ENCODE measurements at regions of chr11 and their contacts with region 1.

Region 1: GRCh38 chr11:22666688-22667439 is 453 bp downstream of the GAS2 start:
- DNase-seq: no peak
- ATAC-seq: peak; percentile 72
- H3K4me3 ChIP-seq: peak overlapping the region; percentile 59
- H3K27ac ChIP-seq: peak overlapping the region; percentile 77
- H3K4me1 ChIP-seq: no peaks in the 10 kb centered on the region
- H3K27me3 ChIP-seq: no peaks in the 10 kb centered on the region
- CTCF ChIP-seq: peak in 1 of 3 experiments; percentile 5; a peak in 1 of 6 replicates
- EP300 ChIP-seq: no peak
- POLR2A ChIP-seq: peak; percentile 65; the same call in 1 of the 2 replicates
- RAD21 ChIP-seq: no peak

Region 2: DNA sequence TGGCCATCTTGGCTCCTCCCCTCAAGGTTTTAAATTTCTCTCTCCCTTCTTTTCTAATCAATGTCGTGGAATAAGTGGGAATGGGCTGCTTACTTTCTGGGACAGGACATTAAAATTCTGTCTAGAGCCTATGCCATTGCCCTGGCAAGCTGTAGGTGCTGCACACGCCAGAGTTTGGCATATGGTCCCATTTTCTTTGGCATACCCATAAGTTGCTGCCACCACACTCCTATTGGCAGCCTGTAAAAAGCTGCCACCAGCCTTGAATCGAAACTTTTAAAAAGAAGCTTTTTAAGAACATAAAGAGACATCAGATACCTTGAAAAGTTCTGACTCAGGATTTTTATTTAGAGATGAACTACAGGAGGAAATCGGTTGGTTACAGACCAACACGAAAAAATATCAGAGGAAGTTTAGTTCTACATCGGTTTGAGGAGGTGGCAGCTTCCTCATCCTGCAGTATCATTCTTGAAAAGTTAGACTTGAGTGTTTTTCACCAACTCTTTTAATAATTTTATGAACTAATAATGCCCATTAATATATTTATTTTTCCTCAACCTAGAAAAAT is 991.7 kb before region 1 on chr11:
- CTCF ChIA-PET with region 1: no interaction called
- POLR2A ChIA-PET with region 1: no interaction called
- RAD21 ChIA-PET with region 1: no interaction called
- SMC1A ChIA-PET with region 1: no interaction called
- in situ Hi-C with region 1: no loop called
- intact Hi-C with region 1: no loop called
- DNase-seq: no peak
- ATAC-seq: no peak
- H3K4me3 ChIP-seq: no peak overlapping the region
- H3K27ac ChIP-seq: no peak overlapping the region
- H3K4me1 ChIP-seq: no peaks in the 10 kb centered on the region
- H3K27me3 ChIP-seq: no peaks in the 10 kb centered on the region
- CTCF ChIP-seq: no peak
- EP300 ChIP-seq: no peak
- POLR2A ChIP-seq: no peak
- RAD21 ChIP-seq: no peak

Region 3: DNA sequence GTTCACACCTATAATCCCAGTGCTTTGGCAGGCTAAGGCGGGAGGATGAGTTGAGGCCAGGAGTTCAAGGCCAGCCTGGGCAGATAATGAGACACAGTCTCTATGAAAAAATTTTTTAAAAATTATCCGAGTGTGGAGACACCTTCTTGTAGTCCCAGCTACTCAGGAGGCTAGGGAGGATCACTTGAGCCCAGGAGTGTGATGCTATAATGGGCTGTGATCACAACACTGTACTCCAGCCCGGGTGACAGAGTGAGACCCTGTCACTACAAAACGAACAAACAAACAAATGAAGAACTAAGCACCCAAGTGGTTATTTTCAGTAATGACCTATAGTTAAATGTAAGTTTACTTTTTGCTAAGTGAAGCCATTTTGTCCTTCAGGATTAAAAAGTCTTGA is 441.7 kb before region 1 on chr11:
- CTCF ChIA-PET with region 1: no interaction called
- POLR2A ChIA-PET with region 1: no interaction called
- RAD21 ChIA-PET with region 1: no interaction called
- SMC1A ChIA-PET with region 1: no interaction called
- in situ Hi-C with region 1: no loop called
- intact Hi-C with region 1: no loop called
- DNase-seq: no peak
- ATAC-seq: no peak
- H3K4me3 ChIP-seq: no peak overlapping the region
- H3K27ac ChIP-seq: no peak overlapping the region
- H3K4me1 ChIP-seq: no peaks in the 10 kb centered on the region
- H3K27me3 ChIP-seq: no peaks in the 10 kb centered on the region
- CTCF ChIP-seq: no peak
- EP300 ChIP-seq: no peak
- POLR2A ChIP-seq: no peak
- RAD21 ChIP-seq: no peak

Region 4: DNA sequence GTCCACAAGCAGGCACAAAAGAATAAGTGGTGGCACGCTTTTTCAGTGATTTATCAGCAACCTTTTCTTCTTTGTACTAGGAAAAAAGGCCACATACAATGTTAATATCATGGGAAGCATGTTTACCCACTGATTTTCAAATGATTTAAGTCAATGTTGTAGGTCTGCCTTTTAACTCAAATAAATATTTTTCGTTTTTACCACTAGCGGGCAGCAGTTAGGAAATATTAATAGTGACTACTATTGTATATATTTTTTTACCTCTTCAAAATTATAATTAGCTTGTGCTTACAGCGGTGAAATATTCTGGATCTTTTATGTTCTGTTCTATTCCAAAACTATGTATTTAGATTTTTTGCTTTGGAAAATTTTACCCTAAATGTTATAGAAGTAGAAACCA is 335.1 kb before region 1 on chr11:
- CTCF ChIA-PET with region 1: no interaction called
- POLR2A ChIA-PET with region 1: no interaction called
- RAD21 ChIA-PET with region 1: interaction called, 4 read pairs
- SMC1A ChIA-PET with region 1: interaction called, 3 read pairs
- in situ Hi-C with region 1: no loop called
- intact Hi-C with region 1: loop called (anchors 5 kb)
- DNase-seq: no peak
- ATAC-seq: no peak
- H3K4me3 ChIP-seq: no peak overlapping the region
- H3K27ac ChIP-seq: no peak overlapping the region
- H3K4me1 ChIP-seq: no peaks in the 10 kb centered on the region
- H3K27me3 ChIP-seq: no peaks in the 10 kb centered on the region; a peak in 1 of 4 replicates
- CTCF ChIP-seq: no peak; a peak in 1 of 6 replicates
- EP300 ChIP-seq: no peak
- POLR2A ChIP-seq: no peak
- RAD21 ChIP-seq: no peak

Region 5: GRCh38 chr11:22405377-22405776 is 261.5 kb before region 1 on chr11:
- CTCF ChIA-PET with region 1: no interaction called
- POLR2A ChIA-PET with region 1: no interaction called
- RAD21 ChIA-PET with region 1: no interaction called
- SMC1A ChIA-PET with region 1: no interaction called
- in situ Hi-C with region 1: no loop called
- intact Hi-C with region 1: no loop called
- DNase-seq: no peak
- ATAC-seq: no peak
- H3K4me3 ChIP-seq: no peak overlapping the region
- H3K27ac ChIP-seq: no peak overlapping the region
- H3K4me1 ChIP-seq: no peaks in the 10 kb centered on the region
- H3K27me3 ChIP-seq: no peaks in the 10 kb centered on the region
- CTCF ChIP-seq: no peak
- EP300 ChIP-seq: no peak
- POLR2A ChIP-seq: no peak
- RAD21 ChIP-seq: no peak

Region 6: GRCh38 chr11:22625448-22626287 is 41.2 kb before region 1 on chr11 and contains the start of gene FANCF:
- CTCF ChIA-PET with region 1: interaction called, 11 read pairs
- POLR2A ChIA-PET with region 1: interaction called, 9 read pairs
- RAD21 ChIA-PET with region 1: interaction called, 7 read pairs
- SMC1A ChIA-PET with region 1: interaction called, 6 read pairs
- in situ Hi-C with region 1: no loop called
- intact Hi-C with region 1: loop called (anchors 2 kb)
- DNase-seq: peak; percentile 100
- ATAC-seq: peak; percentile 95
- H3K4me3 ChIP-seq: peak within 1 kb of the TSS; percentile 85
- H3K27ac ChIP-seq: peak within 1 kb of the TSS; percentile 90
- H3K4me1 ChIP-seq: peaks cover 6% of the 10 kb centered on the region; the same call in 1 of the 2 replicates
- H3K27me3 ChIP-seq: no peaks in the 10 kb centered on the region
- CTCF ChIP-seq: no peak
- EP300 ChIP-seq: no peak
- POLR2A ChIP-seq: peak; percentile 81
- RAD21 ChIP-seq: no peak
- polyA plus RNA-seq, gene FANCF: 1.6 to 3.4 TPM

Region 7: GRCh38 chr11:22690871-22691270 is 24.0 kb after region 1 on chr11:
- CTCF ChIA-PET with region 1: interaction called, 11 read pairs
- POLR2A ChIA-PET with region 1: no interaction called
- RAD21 ChIA-PET with region 1: interaction called, 12 read pairs
- SMC1A ChIA-PET with region 1: interaction called, 7 read pairs
- in situ Hi-C with region 1: no loop called
- intact Hi-C with region 1: no loop called
- DNase-seq: no peak
- ATAC-seq: peak; percentile 32
- H3K4me3 ChIP-seq: no peak overlapping the region
- H3K27ac ChIP-seq: no peak overlapping the region
- H3K4me1 ChIP-seq: no peaks in the 10 kb centered on the region
- H3K27me3 ChIP-seq: no peaks in the 10 kb centered on the region
- CTCF ChIP-seq: no peak
- EP300 ChIP-seq: no peak
- POLR2A ChIP-seq: no peak
- RAD21 ChIP-seq: no peak

Region 8: GRCh38 chr11:22703040-22703439 is 36.2 kb after region 1 on chr11:
- CTCF ChIA-PET with region 1: interaction called, 5 read pairs
- POLR2A ChIA-PET with region 1: interaction called, 3 read pairs
- RAD21 ChIA-PET with region 1: interaction called, 20 read pairs
- SMC1A ChIA-PET with region 1: interaction called, 25 read pairs
- in situ Hi-C with region 1: no loop called
- intact Hi-C with region 1: no loop called
- DNase-seq: peak; percentile 21
- ATAC-seq: peak; percentile 76
- H3K4me3 ChIP-seq: no peak overlapping the region
- H3K27ac ChIP-seq: no peak overlapping the region
- H3K4me1 ChIP-seq: no peaks in the 10 kb centered on the region
- H3K27me3 ChIP-seq: no peaks in the 10 kb centered on the region
- CTCF ChIP-seq: no peak
- EP300 ChIP-seq: peak in 1 of 2 experiments; percentile 43; a peak in 1 of 4 replicates
- POLR2A ChIP-seq: no peak
- RAD21 ChIP-seq: no peak

Region 9: DNA sequence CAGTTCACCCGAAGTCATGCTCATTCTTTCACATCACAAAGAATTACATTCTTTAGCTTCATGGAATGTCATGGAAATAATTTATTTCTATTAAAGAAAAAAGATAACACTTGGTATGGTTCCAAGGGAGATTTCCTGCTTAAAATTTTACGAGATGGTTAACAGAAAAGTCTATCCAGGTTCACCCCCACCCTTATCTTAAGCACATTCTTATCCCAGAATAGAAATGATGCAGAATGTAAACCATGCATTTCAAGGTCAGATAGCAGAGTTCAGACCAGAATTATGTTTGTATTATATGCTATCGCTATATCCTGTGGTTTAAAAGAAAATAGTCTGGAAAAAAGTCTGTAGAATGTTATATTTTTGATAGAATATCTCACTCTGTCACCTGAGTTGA is 58.2 kb after region 1 on chr11:
- CTCF ChIA-PET with region 1: interaction called, 94 read pairs
- POLR2A ChIA-PET with region 1: interaction called, 4 read pairs
- RAD21 ChIA-PET with region 1: interaction called, 110 read pairs
- SMC1A ChIA-PET with region 1: interaction called, 106 read pairs
- in situ Hi-C with region 1: no loop called
- intact Hi-C with region 1: loop called (anchors 1 kb)
- DNase-seq: no peak
- ATAC-seq: no peak
- H3K4me3 ChIP-seq: no peak overlapping the region
- H3K27ac ChIP-seq: no peak overlapping the region
- H3K4me1 ChIP-seq: no peaks in the 10 kb centered on the region
- H3K27me3 ChIP-seq: no peaks in the 10 kb centered on the region
- CTCF ChIP-seq: no peak
- EP300 ChIP-seq: no peak
- POLR2A ChIP-seq: no peak
- RAD21 ChIP-seq: no peak

Region 10: GRCh38 chr11:22829231-22830081 is 162.6 kb after region 1 on chr11 and contains the start of gene SVIP:
- CTCF ChIA-PET with region 1: interaction called, 23 read pairs
- POLR2A ChIA-PET with region 1: interaction called, 7 read pairs
- RAD21 ChIA-PET with region 1: interaction called, 18 read pairs
- SMC1A ChIA-PET with region 1: interaction called, 21 read pairs
- in situ Hi-C with region 1: no loop called
- intact Hi-C with region 1: no loop called
- DNase-seq: peak; percentile 69
- ATAC-seq: peak; percentile 94
- H3K4me3 ChIP-seq: peak within 1 kb of the TSS; percentile 87
- H3K27ac ChIP-seq: peak within 1 kb of the TSS; percentile 59
- H3K4me1 ChIP-seq: no peaks in the 10 kb centered on the region
- H3K27me3 ChIP-seq: no peaks in the 10 kb centered on the region
- CTCF ChIP-seq: peak; percentile 76 to 92 (median 89)
- EP300 ChIP-seq: no peak
- POLR2A ChIP-seq: peak; percentile 91
- RAD21 ChIP-seq: peak; percentile 56
- polyA plus RNA-seq, gene SVIP: 59.0 to 78.0 TPM

Region 11: DNA sequence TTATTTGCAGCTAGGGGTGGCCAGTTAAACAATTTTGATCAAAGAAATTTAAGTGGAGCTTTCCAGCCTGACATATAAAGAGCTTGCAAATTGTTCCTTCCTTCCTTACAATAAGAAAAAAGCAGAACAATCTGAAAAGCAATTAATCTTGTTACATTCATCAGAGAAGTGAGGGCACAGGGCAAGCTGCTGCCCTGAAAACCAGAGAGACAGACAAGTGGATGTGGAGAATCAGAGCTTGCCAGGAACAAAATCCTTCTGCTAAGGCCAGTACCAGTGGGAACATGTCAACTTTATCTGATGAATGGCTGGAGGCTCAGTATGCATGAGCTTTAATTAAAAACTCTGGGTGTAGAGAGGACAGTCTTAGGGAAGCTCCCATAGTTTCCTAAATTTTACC is 184.6 kb after region 1 on chr11:
- CTCF ChIA-PET with region 1: no interaction called
- POLR2A ChIA-PET with region 1: no interaction called
- RAD21 ChIA-PET with region 1: no interaction called
- SMC1A ChIA-PET with region 1: no interaction called
- in situ Hi-C with region 1: no loop called
- intact Hi-C with region 1: no loop called
- DNase-seq: no peak
- ATAC-seq: no peak
- H3K4me3 ChIP-seq: no peak overlapping the region
- H3K27ac ChIP-seq: no peak overlapping the region
- H3K4me1 ChIP-seq: no peaks in the 10 kb centered on the region
- H3K27me3 ChIP-seq: no peaks in the 10 kb centered on the region
- CTCF ChIP-seq: no peak
- EP300 ChIP-seq: no peak
- POLR2A ChIP-seq: no peak
- RAD21 ChIP-seq: no peak

Measured in GM12878 (cell line).